MCF 10A (cell line): ENCODE measurements at regions of chr2 and their contacts with region 1.

Region 1: GRCh38 chr2:27855476-27855875 is 34.7 kb downstream of the RBKS start:
- DNase-seq: peak; percentile 30
- H3K4me3 Mint-ChIP-seq: no peak overlapping the region
- H3K27ac Mint-ChIP-seq: peak overlapping the region; percentile 57
- H3K4me1 Mint-ChIP-seq: peaks cover 16% of the 10 kb centered on the region
- H3K27me3 Mint-ChIP-seq: no peaks in the 10 kb centered on the region
- CTCF ChIP-seq: no peak

Region 2: GRCh38 chr2:27807476-27807875 is 48.0 kb before region 1 on chr2:
- CTCF ChIA-PET with region 1: no interaction called
- POLR2A ChIA-PET with region 1: interaction called, 10 read pairs
- intact Hi-C with region 1: no loop called
- DNase-seq: peak; percentile 55
- H3K4me3 Mint-ChIP-seq: no peak overlapping the region
- H3K27ac Mint-ChIP-seq: no peak overlapping the region
- H3K4me1 Mint-ChIP-seq: peaks cover 39% of the 10 kb centered on the region
- H3K27me3 Mint-ChIP-seq: no peaks in the 10 kb centered on the region
- CTCF ChIP-seq: peak; percentile 47

Region 3: DNA sequence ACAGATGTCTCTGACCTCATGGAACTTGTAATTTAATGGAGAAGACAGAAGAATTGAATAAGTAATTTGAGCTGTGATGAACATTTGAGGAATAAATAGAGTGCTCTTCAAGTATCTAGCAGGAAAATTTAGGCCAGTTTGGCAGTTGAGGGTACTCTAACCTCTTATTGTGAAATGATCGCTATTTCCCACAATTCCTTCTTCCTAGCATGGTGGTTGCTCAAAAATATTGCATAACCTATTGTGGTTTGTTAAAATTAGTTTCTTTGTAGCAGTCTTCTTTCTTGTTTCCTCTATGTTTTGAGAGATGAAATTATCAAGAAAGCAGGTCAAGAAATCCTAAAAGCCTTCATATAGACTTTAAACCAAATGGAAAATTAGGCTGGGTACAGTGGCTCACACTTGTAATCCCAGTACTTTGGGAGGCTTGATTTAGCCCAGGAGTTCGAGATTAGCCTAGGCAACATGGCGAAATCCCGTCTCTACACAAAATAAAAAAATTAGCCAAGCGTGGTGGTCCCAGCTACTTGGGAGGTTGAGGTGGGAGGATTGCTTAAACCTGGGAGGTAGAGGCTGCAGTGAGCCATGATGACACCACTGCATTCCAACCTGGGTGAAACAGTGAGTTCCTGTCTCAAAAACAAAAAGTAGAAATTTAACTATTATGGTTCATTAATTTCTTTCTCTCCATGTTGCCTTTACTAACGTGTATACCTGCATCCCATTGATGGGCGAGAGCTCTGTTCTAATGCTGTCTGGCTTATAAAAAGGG is 24.0 kb before region 1 on chr2:
- CTCF ChIA-PET with region 1: interaction called, 3 read pairs
- POLR2A ChIA-PET with region 1: interaction called, 4 read pairs
- intact Hi-C with region 1: loop called (anchors 1 kb)
- DNase-seq: peak; percentile 8
- H3K4me3 Mint-ChIP-seq: no peak overlapping the region
- H3K27ac Mint-ChIP-seq: no peak overlapping the region
- H3K4me1 Mint-ChIP-seq: peaks cover 4% of the 10 kb centered on the region
- H3K27me3 Mint-ChIP-seq: no peaks in the 10 kb centered on the region
- CTCF ChIP-seq: no peak